ENCODE measurements at regions of chr17 and their contacts with region 1.

Region 1: DNA sequence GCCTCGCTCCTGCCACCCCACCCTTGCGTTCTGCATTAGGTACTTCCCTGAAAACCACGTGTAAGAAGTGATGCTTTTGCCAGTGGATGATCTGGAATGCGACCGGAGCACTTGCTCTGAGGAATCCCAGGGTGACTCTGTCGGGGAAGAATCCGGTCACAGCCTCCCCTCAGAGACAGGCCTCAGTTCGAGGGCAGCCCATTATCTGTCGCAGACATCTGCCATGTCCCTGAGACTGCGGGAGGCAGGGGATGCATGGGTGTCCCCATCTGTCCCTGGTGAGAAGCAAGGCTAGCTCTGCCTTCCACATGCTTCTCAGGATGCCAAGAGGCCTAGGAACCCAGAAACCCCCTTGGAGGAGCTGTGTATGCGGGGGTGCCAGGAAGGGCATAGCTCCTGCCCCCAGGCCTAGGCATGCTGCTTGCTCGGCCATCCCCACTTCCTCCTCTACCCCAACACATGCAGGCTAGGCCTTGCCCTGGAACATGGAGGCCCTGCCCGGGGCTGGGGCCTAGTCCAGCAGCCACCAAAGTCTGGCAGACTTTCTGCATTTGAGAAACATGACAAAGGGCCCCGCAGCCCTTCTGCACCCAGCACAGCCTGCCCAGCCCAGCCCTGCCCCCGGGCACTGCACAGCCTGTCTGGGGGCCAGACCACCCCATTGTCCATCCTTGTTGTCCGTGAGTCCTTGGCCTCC is 20.5 kb downstream of the MNT start:
- DNase-seq: peak; percentile 85
- H3K4me3 ChIP-seq: no peak overlapping the region
- H3K27ac ChIP-seq: peak overlapping the region; percentile 27 to 97; a peak in 3 of 4 replicates
- H3K4me1 ChIP-seq: peaks cover 0 to 56% of the 10 kb centered on the region in 2 experiments; a peak in 1 of 4 replicates
- H3K27me3 ChIP-seq: no peaks in the 10 kb centered on the region
- CTCF ChIP-seq: no peak
- EP300 ChIP-seq: no peak
- RAD21 ChIP-seq: no peak

Region 2: GRCh38 chr17:2259769-2260536 is 120.4 kb before region 1 on chr17:
- CTCF ChIA-PET with region 1: no interaction called
- POLR2A ChIA-PET with region 1: no interaction called
- DNase-seq: no peak
- H3K4me3 ChIP-seq: no peak overlapping the region
- H3K27ac ChIP-seq: no peak overlapping the region; a peak in 1 of 4 replicates
- H3K4me1 ChIP-seq: peaks cover 2 to 23% of the 10 kb centered on the region in 2 experiments; a peak in 3 of 4 replicates
- H3K27me3 ChIP-seq: no peaks in the 10 kb centered on the region
- CTCF ChIP-seq: no peak
- EP300 ChIP-seq: no peak
- RAD21 ChIP-seq: no peak

Region 3: DNA sequence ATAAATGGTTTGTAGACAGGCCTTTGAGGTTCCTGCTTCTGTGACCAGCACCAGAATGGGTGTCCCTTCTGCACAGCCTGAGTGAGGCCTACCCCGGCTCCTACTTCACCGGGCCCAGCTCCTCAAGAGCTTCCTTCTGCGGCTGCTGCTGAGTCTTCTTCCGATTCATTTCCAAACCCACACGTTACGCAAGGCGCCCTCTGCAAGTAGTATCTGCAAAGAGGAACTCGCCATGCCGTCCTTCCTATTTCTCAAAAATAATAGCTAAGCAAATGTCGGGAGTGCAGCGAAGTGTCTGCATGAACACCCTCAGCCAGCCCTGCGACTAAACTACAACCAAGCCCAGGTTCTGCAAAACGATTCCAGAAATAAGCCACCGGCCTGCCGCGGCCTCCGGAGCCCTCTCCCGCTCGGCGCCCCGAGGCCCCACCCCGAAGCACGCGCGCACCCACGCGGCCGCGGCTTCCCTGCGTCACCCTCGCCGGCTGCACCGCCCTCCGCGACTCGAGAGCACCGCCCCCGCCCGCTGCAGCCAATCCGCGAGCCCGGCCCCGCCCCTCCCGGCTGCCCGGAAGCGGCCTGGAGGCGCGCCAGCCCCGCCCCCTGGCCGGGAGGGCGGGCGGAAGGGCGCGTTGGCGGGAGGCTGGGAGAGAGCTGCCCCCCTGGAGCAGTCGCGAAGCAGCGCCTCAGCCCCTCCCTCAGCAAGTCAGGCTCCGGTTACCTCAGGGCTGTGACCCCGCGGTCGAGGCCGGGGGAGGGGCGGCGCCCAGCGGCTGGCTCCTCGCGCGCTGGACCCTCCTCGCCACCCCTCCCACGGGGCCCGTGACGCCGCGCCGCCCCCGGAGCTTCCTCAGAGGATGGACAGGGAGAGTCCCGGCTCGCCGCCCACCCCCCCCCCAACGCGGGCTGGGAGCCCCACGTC is 12.1 kb after region 1 on chr17:
- CTCF ChIA-PET with region 1: interaction called, 654 read pairs
- POLR2A ChIA-PET with region 1: interaction called, 26 read pairs
- DNase-seq: peak; percentile 97
- H3K4me3 ChIP-seq: peak overlapping the region; percentile 66 to 79
- H3K27ac ChIP-seq: peak overlapping the region; percentile 98 to 99
- H3K4me1 ChIP-seq: peaks cover 26 to 45% of the 10 kb centered on the region in 2 experiments; a peak in 3 of 4 replicates
- H3K27me3 ChIP-seq: no peaks in the 10 kb centered on the region
- CTCF ChIP-seq: no peak
- EP300 ChIP-seq: no peak
- RAD21 ChIP-seq: no peak

Measured in SK-N-SH (cell line).